Natural killer cell (primary cell): ENCODE measurements at regions of chr10 and their contacts with region 1.

Region 1: DNA sequence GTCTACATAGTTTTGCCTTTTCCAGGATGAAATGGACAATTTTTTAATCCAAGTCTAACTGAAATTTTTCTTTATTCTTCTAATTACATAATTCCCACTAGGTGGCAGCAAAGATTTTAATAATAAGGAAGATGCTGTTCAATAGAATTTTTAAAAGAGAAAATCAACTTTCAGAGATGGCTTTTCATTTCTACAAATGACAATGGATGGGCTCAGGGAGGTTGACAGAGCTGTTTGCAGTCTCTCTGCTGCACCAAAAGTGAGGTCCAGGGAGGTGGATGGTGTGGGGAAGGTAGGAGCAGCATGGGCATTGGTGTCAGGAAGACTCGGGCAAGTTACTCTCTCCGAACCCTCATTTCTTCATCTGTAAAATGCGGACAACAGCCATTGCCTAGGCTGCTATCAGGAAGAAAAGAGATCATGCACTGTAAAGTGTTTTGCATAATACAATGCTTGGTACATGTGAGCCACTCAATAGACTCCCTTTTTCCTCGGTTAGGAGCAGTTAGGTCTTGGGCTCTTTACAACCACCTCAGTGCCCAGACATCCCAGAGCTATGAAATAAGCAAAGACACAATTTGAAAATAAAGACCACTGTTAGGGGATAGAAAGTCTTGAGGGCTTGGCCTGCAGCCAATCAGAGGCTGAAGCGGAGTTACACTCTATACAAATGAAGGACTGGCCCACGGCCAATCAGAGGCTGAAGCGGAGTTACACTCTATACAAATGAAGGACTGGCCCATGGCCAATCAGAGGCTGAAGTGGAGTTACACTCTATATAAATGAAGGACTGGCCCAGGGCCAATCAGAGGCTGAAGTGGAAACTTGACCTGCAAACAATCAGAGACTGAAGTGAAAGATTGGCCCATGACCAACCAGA is 107.1 kb downstream of the ABLIM1 start:
- DNase-seq: peak in 1 of 2 donors; percentile 58
- ATAC-seq: no peak
- H3K4me3 ChIP-seq: no peak overlapping the region
- H3K4me3 Mint-ChIP-seq: no peak overlapping the region
- H3K27ac ChIP-seq: no peak overlapping the region
- H3K27ac Mint-ChIP-seq: no peak overlapping the region
- H3K4me1 ChIP-seq: peaks cover 17% of the 10 kb centered on the region
- H3K4me1 Mint-ChIP-seq: peaks cover 23 to 30% of the 10 kb centered on the region in 2 donors
- H3K27me3 ChIP-seq: no peaks in the 10 kb centered on the region
- H3K27me3 Mint-ChIP-seq: no peaks in the 10 kb centered on the region
- CTCF ChIP-seq: peak; percentile 71

Region 2: DNA sequence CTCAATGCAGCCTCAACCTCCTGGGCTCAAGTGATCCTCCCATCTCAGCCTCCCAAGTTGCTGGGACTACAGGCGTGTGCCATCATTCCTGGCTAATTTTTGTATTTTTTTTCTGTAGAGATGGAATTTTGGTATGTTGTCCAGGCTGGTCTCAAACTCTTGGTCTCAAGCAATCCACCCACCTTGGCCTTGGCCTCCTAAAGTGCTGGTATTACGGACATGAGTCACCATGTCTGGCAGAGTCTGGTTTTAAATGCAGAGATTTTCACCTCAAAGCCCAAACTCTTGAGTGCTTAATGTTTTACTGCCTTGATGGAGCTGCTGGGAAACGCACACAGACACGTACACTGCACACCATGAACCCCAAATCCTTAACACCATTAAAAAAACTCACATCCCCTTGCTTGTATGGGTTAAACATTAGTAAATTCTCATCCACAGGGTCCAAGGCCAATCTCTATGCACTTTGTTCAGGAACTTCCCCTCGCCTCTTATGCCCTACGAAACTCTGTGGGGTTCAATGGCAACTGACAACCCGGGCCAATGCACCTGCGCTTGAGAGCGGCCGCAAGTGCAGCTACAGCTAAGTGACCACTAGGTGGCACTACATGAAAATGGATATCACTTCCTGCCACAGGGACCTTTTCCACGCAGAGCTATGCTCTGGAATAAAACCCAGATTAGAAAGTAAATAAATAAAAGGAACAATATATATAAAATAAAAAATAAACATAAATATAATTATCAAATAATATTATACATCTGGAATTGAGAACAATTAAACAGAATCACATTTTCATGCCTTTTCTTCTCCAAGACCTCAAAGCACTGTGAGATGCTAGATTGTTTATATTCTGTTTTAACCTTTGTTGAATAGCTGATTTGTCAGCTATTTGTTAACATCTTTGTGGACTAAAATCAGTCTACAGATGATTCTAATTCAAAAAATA is 79.8 kb before region 1 on chr10:
- intact Hi-C with region 1: loop called (anchors 1 kb)
- DNase-seq: peak; percentile 45 to 89
- ATAC-seq: peak; percentile 82 to 98 (median 96)
- H3K4me3 ChIP-seq: no peak overlapping the region
- H3K4me3 Mint-ChIP-seq: no peak overlapping the region
- H3K27ac ChIP-seq: no peak overlapping the region
- H3K27ac Mint-ChIP-seq: peak overlapping the region in 1 of 2 donors; percentile 59
- H3K4me1 ChIP-seq: peaks cover 3% of the 10 kb centered on the region
- H3K4me1 Mint-ChIP-seq: peaks cover 7 to 10% of the 10 kb centered on the region in 2 donors
- H3K27me3 ChIP-seq: no peaks in the 10 kb centered on the region
- H3K27me3 Mint-ChIP-seq: no peaks in the 10 kb centered on the region
- CTCF ChIP-seq: peak; percentile 95

Region 3: GRCh38 chr10:114703377-114704107 is 152.5 kb after region 1 on chr10:
- intact Hi-C with region 1: loop called (anchors 2 kb)
- DNase-seq: peak in 1 of 2 donors; percentile 62
- ATAC-seq: peak in 2 of 3 donors; percentile 27 to 37
- H3K4me3 ChIP-seq: no peak overlapping the region
- H3K4me3 Mint-ChIP-seq: no peak overlapping the region
- H3K27ac ChIP-seq: no peak overlapping the region
- H3K27ac Mint-ChIP-seq: no peak overlapping the region
- H3K4me1 ChIP-seq: no peaks in the 10 kb centered on the region
- H3K4me1 Mint-ChIP-seq: no peaks in the 10 kb centered on the region
- H3K27me3 ChIP-seq: no peaks in the 10 kb centered on the region
- H3K27me3 Mint-ChIP-seq: peaks cover 6 to 17% of the 10 kb centered on the region in 2 donors
- CTCF ChIP-seq: peak; percentile 36

Region 4: GRCh38 chr10:114821293-114821914 is 270.4 kb after region 1 on chr10 and contains the start of gene FHIP2A:
- intact Hi-C with region 1: loop called (anchors 10 kb)
- DNase-seq: peak; percentile 88 to 90
- ATAC-seq: peak; percentile 92 to 98 (median 93)
- H3K4me3 ChIP-seq: peak within 1 kb of the TSS; percentile 79
- H3K4me3 Mint-ChIP-seq: peak within 1 kb of the TSS; percentile 94
- H3K27ac ChIP-seq: peak within 1 kb of the TSS; percentile 75
- H3K27ac Mint-ChIP-seq: peak within 1 kb of the TSS; percentile 94 to 95
- H3K4me1 ChIP-seq: peaks cover 4% of the 10 kb centered on the region
- H3K4me1 Mint-ChIP-seq: peaks cover 27 to 34% of the 10 kb centered on the region in 2 donors
- H3K27me3 ChIP-seq: no peaks in the 10 kb centered on the region
- H3K27me3 Mint-ChIP-seq: peaks cover 0 to 9% of the 10 kb centered on the region in 2 donors
- CTCF ChIP-seq: peak; percentile 51
- total RNA-seq, gene FHIP2A: 36.0 to 42.4 (median 39.5) TPM

Region 5: DNA sequence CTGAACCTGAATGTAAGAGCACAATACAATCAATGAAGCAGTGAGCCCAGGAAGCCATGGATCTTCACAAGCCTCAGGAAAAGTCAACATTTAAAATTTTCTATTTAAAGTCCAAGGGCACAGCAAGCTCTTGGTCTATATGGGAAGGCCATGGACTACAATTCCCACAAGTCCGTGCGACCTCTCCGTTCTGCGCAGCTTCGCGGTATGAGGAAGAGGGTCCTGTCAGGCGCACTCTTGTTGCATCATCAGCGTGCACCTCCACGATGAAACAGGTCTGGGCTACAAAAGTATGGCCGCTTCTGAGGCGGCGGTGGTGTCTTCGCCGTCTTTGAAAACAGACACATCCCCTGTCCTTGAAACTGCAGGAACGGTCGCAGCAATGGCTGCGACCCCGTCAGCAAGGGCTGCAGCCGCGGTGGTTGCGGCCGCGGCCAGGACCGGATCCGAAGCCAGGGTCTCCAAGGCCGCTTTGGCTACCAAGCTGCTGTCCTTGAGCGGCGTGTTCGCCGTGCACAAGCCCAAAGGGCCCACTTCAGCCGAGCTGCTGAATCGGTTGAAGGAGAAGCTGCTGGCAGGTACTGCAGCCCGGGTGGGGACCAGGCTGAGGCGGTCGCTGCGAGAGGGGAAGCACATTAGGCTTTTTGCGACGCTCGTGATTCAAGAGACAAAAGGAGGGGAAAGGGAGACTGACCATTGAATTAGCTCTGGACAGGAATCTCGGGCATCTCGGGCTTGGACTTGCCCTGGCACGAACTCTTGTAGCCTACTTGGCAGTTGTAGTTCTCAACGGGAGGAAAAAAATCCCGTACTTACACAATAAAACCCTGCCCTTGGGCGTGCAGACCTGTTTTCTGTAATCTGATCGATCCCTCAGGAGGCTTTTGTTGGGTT is 387.2 kb after region 1 on chr10 and contains the start of gene TRUB1:
- intact Hi-C with region 1: loop called (anchors 10 kb)
- DNase-seq: peak; percentile 82 to 96
- ATAC-seq: peak; percentile 99 to 100 (median 100)
- H3K4me3 ChIP-seq: peak within 1 kb of the TSS; percentile 83
- H3K4me3 Mint-ChIP-seq: peak within 1 kb of the TSS; percentile 92
- H3K27ac ChIP-seq: peak within 1 kb of the TSS; percentile 69
- H3K27ac Mint-ChIP-seq: peak within 1 kb of the TSS; percentile 91 to 94
- H3K4me1 ChIP-seq: peaks cover 7% of the 10 kb centered on the region
- H3K4me1 Mint-ChIP-seq: peaks cover 30 to 31% of the 10 kb centered on the region in 2 donors
- H3K27me3 ChIP-seq: no peaks in the 10 kb centered on the region
- H3K27me3 Mint-ChIP-seq: no peaks in the 10 kb centered on the region
- CTCF ChIP-seq: no peak
- total RNA-seq, gene TRUB1: 7.3 to 10.3 (median 10.1) TPM